ENCODE measurements at regions of chrX and their contacts with region 1.

Region 1: DNA sequence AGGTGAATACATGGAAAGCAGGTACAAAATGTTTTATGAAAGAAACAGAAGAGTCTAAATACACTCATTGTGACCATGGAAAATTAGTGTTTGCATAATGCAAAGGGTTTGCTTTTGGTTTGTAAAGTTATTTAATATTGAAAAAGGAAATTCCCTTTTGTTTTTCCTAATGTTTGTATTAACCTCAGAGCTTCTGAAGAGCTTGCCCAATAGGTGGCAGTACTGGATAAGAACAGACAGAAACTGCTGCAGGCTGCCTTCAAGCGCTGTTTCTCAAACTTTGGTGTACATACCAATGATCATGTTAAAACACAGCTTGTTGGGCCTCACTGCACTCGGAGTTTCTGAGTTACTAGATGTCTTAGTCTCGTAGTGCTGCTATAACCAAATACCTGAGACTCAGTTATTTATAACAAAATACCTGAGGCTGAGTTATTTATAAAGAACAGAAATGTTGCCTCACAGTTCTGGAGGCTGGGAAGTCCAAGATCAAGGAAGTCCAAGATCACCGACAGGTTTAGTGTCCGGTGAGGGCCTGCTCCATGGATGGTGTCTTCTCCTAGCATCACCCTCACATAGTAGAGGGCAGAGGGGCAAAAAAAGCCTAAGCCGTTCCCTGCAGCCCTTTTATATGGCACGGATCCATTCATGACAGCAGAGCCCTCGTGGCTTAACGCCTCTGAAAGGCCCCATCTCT is 54.2 kb downstream of the SUPT20HL2 start:
- DNase-seq: peak; percentile 38
- ATAC-seq: no peak
- H3K4me3 Mint-ChIP-seq: no peak overlapping the region
- H3K27ac Mint-ChIP-seq: no peak overlapping the region
- H3K4me1 Mint-ChIP-seq: peaks cover 23% of the 10 kb centered on the region
- H3K27me3 Mint-ChIP-seq: no peaks in the 10 kb centered on the region

Region 2: DNA sequence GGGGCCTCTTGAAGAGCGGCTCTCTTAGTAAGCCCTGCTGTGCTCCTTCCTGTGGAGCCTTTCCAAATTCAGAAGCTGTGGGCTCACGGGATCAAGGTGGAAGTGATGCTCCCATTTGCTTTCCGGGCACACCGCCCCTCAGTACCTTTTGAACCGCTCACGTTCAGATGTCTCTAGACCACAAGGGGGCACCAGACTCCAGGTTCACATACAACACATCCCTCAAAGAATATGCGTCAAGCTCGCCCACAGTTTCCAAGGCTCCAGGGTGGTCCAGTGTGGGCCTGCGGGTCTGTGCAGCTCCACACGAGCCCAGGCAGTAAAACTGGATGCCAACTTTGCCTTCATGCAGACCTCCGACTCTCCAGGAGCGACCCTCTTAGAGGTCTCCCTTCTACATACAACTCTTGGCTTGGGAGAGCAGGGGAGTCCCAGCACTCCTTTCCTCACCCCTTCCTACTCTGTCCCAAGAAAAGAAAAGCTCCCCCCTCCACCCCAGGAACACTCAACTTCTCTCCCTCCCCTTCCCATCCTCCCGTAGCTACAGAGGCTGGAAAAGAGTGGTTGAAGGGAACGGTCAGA is 111.8 kb after region 1 on chrX:
- CTCF ChIA-PET with region 1: interaction called, 14 read pairs
- POLR2A ChIA-PET with region 1: no interaction called
- DNase-seq: peak; percentile 72
- ATAC-seq: peak; percentile 85
- H3K4me3 Mint-ChIP-seq: peak overlapping the region; percentile 42
- H3K27ac Mint-ChIP-seq: no peak overlapping the region
- H3K4me1 Mint-ChIP-seq: peaks cover 8% of the 10 kb centered on the region
- H3K27me3 Mint-ChIP-seq: peaks cover 4% of the 10 kb centered on the region

Region 3: DNA sequence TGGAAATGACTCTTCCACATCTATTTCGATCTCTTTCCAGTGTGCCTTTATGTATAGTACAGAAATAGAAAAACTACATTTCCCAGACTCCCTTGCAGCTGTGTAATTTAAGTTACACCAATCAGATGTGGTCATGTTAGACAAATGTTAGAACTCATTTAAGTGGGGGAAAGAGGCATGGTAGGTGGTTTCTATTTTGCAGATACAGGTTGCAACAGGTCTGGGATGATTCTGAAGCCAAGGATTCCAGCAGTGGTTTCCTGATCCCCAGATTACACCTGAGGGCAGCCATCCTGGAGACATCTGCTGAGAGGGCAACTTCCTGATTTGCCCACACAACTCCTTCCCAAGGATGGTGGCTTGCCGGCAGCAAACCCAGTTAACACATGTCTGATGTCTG is 166.7 kb after region 1 on chrX:
- CTCF ChIA-PET with region 1: no interaction called
- POLR2A ChIA-PET with region 1: no interaction called
- DNase-seq: no peak
- ATAC-seq: no peak
- H3K4me3 Mint-ChIP-seq: no peak overlapping the region
- H3K27ac Mint-ChIP-seq: no peak overlapping the region
- H3K4me1 Mint-ChIP-seq: peaks cover 8% of the 10 kb centered on the region
- H3K27me3 Mint-ChIP-seq: no peaks in the 10 kb centered on the region